ENCODE measurements at regions of chr2 and their contacts with region 1.

Region 1: GRCh38 chr2:215454519-215455246 is 18.8 kb upstream of the FN1 start:
- DNase-seq: peak; percentile 42
- H3K4me3 ChIP-seq: no peak overlapping the region; a peak in 1 of 4 replicates
- H3K27ac ChIP-seq: no peak overlapping the region
- H3K4me1 ChIP-seq: no peaks in the 10 kb centered on the region; a peak in 1 of 4 replicates
- H3K27me3 ChIP-seq: no peaks in the 10 kb centered on the region
- CTCF ChIP-seq: peak; percentile 85
- EP300 ChIP-seq: no peak
- RAD21 ChIP-seq: peak; percentile 82

Region 2: GRCh38 chr2:215442404-215442794 is 12.3 kb before region 1 on chr2:
- CTCF ChIA-PET with region 1: interaction called, 10 read pairs
- POLR2A ChIA-PET with region 1: no interaction called
- DNase-seq: no peak
- H3K4me3 ChIP-seq: no peak overlapping the region
- H3K27ac ChIP-seq: no peak overlapping the region
- H3K4me1 ChIP-seq: peaks cover 0 to 14% of the 10 kb centered on the region in 2 experiments; a peak in 2 of 4 replicates
- H3K27me3 ChIP-seq: no peaks in the 10 kb centered on the region
- CTCF ChIP-seq: no peak
- EP300 ChIP-seq: no peak
- RAD21 ChIP-seq: no peak

Region 3: GRCh38 chr2:215828517-215829184 is 374.0 kb after region 1 on chr2:
- CTCF ChIA-PET with region 1: interaction called, 14 read pairs
- POLR2A ChIA-PET with region 1: no interaction called
- DNase-seq: peak; percentile 46
- H3K4me3 ChIP-seq: no peak overlapping the region; a peak in 1 of 4 replicates
- H3K27ac ChIP-seq: no peak overlapping the region
- H3K4me1 ChIP-seq: peaks cover 3 to 21% of the 10 kb centered on the region in 2 experiments; a peak in 2 of 4 replicates
- H3K27me3 ChIP-seq: no peaks in the 10 kb centered on the region
- CTCF ChIP-seq: peak; percentile 65
- EP300 ChIP-seq: no peak
- RAD21 ChIP-seq: peak; percentile 80

Measured in SK-N-SH (cell line).